ENCODE measurements at regions of chr1 and their contacts with region 1.

Region 1: DNA sequence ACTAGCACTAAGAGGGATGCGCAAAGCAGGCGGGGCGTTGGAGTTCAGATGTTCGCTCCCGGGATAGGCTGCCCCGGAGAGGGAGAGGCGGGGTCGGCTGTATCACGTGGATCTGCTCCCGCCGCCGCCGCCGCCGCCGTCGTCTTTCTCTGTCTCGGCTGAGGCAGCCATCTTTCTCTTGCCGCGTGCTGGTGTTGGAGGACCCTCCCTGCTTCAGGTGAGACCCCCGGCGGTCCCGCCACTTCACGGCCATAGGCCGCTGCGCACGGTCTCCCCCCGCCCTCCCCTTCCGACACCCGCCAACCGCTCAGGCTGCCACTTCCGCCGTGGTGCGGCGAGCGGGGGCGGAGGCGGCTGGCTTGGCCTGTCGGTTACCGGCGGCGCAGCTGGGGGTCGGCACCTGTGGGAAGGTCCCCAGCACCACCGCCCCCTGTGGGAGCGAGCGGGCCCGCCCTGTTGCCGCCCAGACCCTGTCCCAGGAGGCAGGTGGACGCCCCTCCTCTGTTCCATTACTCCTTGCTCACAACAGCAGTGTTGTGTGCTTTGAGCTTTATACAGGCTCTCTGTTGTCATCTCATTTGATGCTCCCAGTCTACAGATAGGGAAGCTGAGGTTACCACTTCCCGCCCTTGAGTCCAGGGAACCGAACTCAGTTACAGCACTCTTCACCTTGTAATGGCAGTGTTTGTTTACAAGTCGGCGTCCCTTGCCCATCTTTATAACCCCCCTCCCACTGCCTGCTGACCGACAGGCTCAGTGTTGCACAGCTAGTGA is at the start of gene BTF3L4:
- DNase-seq: peak; percentile 85 to 95 (median 90)
- ATAC-seq: peak; percentile 96
- H3K4me3 ChIP-seq: peak within 1 kb of the TSS; percentile 88
- H3K4me3 Mint-ChIP-seq: peak within 1 kb of the TSS; percentile 97
- H3K27ac ChIP-seq: peak within 1 kb of the TSS; percentile 83 to 84
- H3K27ac Mint-ChIP-seq: peak within 1 kb of the TSS; percentile 92
- H3K4me1 ChIP-seq: peaks cover 26% of the 10 kb centered on the region
- H3K4me1 Mint-ChIP-seq: peaks cover 71% of the 10 kb centered on the region
- H3K27me3 ChIP-seq: no peaks in the 10 kb centered on the region
- H3K27me3 Mint-ChIP-seq: no peaks in the 10 kb centered on the region
- CTCF ChIP-seq: no peak
- total RNA-seq, gene BTF3L4: 29.4 to 34.1 TPM

Region 2: GRCh38 chr1:51519048-51519864 is 537.1 kb before region 1 on chr1 and contains the start of gene EPS15:
- CTCF ChIA-PET with region 1: no interaction called
- POLR2A ChIA-PET with region 1: interaction called, 3 read pairs
- intact Hi-C with region 1: loop called in 1 of 2 experiments (anchors 10 kb)
- DNase-seq: peak; percentile 73 to 92 (median 82)
- ATAC-seq: peak; percentile 69
- H3K4me3 ChIP-seq: peak within 1 kb of the TSS; percentile 76
- H3K4me3 Mint-ChIP-seq: peak within 1 kb of the TSS; percentile 94
- H3K27ac ChIP-seq: peak within 1 kb of the TSS; percentile 48 to 50
- H3K27ac Mint-ChIP-seq: peak within 1 kb of the TSS; percentile 88
- H3K4me1 ChIP-seq: peaks cover 24% of the 10 kb centered on the region
- H3K4me1 Mint-ChIP-seq: peaks cover 59% of the 10 kb centered on the region
- H3K27me3 ChIP-seq: no peaks in the 10 kb centered on the region
- H3K27me3 Mint-ChIP-seq: no peaks in the 10 kb centered on the region
- CTCF ChIP-seq: no peak
- total RNA-seq, gene EPS15: 44.5 to 47.9 TPM

Region 3: GRCh38 chr1:51989723-51990477 is 66.5 kb before region 1 on chr1:
- CTCF ChIA-PET with region 1: no interaction called
- POLR2A ChIA-PET with region 1: no interaction called
- intact Hi-C with region 1: no loop called
- DNase-seq: peak in 2 of 14 experiments; percentile 7 to 16
- ATAC-seq: no peak
- H3K4me3 ChIP-seq: no peak overlapping the region
- H3K4me3 Mint-ChIP-seq: peak overlapping the region; percentile 64
- H3K27ac ChIP-seq: no peak overlapping the region
- H3K27ac Mint-ChIP-seq: no peak overlapping the region
- H3K4me1 ChIP-seq: peaks cover 13% of the 10 kb centered on the region
- H3K4me1 Mint-ChIP-seq: peaks cover 17% of the 10 kb centered on the region
- H3K27me3 ChIP-seq: peaks cover 15 to 29% of the 10 kb centered on the region in 2 experiments
- H3K27me3 Mint-ChIP-seq: peaks cover 35% of the 10 kb centered on the region
- CTCF ChIP-seq: no peak

Region 4: DNA sequence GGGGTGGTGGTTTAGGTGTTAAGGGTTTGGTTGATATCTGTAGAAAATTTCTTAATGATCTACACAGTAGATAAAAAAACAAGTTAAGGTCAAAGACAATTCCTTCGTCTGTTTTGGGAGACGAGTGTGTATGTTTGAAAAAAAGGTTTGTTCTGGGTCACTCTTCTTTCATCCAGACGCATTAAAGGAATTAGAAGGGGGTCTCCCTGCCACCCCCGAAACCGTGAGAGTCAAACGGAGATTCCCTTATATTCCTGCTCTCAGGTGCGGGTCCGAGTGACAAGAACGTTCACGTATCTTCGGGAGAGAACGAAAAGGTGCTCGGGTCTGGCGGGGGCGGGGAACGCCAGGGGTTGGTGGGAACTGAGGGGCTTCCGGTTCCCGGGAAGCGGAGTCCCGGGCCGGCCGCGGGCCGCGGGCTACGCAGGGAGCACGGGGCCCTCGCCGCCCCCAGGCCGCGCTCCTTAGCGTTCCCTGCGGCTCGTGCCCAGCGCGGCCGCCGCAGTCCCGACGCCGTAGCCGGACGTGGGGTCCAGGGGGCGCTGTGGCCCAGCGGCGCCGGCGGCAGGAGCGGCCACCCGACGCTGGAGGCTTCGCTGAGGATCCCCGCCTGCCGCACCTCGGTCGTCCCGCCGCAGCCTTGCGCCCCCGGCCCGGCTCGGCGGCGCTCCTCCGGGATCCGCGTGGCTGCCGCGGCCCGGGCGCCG is 85.3 kb after region 1 on chr1 and contains the start of gene ZFYVE9:
- CTCF ChIA-PET with region 1: no interaction called
- POLR2A ChIA-PET with region 1: no interaction called
- intact Hi-C with region 1: loop called in 1 of 2 experiments (anchors 5 kb)
- DNase-seq: peak; percentile 43 to 91 (median 68)
- ATAC-seq: peak; percentile 82
- H3K4me3 ChIP-seq: peak within 1 kb of the TSS; percentile 63
- H3K4me3 Mint-ChIP-seq: peak within 1 kb of the TSS; percentile 97
- H3K27ac ChIP-seq: no peak within 1 kb of the TSS
- H3K27ac Mint-ChIP-seq: peak within 1 kb of the TSS; percentile 85
- H3K4me1 ChIP-seq: peaks cover 23% of the 10 kb centered on the region
- H3K4me1 Mint-ChIP-seq: peaks cover 36% of the 10 kb centered on the region
- H3K27me3 ChIP-seq: no peaks in the 10 kb centered on the region
- H3K27me3 Mint-ChIP-seq: no peaks in the 10 kb centered on the region
- CTCF ChIP-seq: peak; percentile 33
- total RNA-seq, gene ZFYVE9: 5.4 to 6.1 TPM

Region 5: GRCh38 chr1:52159033-52159789 is 102.9 kb after region 1 on chr1:
- CTCF ChIA-PET with region 1: no interaction called
- POLR2A ChIA-PET with region 1: no interaction called
- intact Hi-C with region 1: no loop called
- DNase-seq: no peak
- ATAC-seq: no peak
- H3K4me3 ChIP-seq: no peak overlapping the region
- H3K4me3 Mint-ChIP-seq: no peak overlapping the region
- H3K27ac ChIP-seq: no peak overlapping the region
- H3K27ac Mint-ChIP-seq: no peak overlapping the region
- H3K4me1 ChIP-seq: no peaks in the 10 kb centered on the region
- H3K4me1 Mint-ChIP-seq: no peaks in the 10 kb centered on the region
- H3K27me3 ChIP-seq: no peaks in the 10 kb centered on the region
- H3K27me3 Mint-ChIP-seq: no peaks in the 10 kb centered on the region
- CTCF ChIP-seq: no peak

Region 6: GRCh38 chr1:52237430-52237829 is 181.1 kb after region 1 on chr1:
- CTCF ChIA-PET with region 1: no interaction called
- POLR2A ChIA-PET with region 1: no interaction called
- intact Hi-C with region 1: no loop called
- DNase-seq: no peak
- ATAC-seq: no peak
- H3K4me3 ChIP-seq: no peak overlapping the region
- H3K4me3 Mint-ChIP-seq: no peak overlapping the region
- H3K27ac ChIP-seq: no peak overlapping the region
- H3K27ac Mint-ChIP-seq: no peak overlapping the region
- H3K4me1 ChIP-seq: no peaks in the 10 kb centered on the region
- H3K4me1 Mint-ChIP-seq: peaks cover 4% of the 10 kb centered on the region
- H3K27me3 ChIP-seq: no peaks in the 10 kb centered on the region
- H3K27me3 Mint-ChIP-seq: no peaks in the 10 kb centered on the region
- CTCF ChIP-seq: no peak

Region 7: GRCh38 chr1:52404116-52404986 is 348.0 kb after region 1 on chr1 and contains the starts of genes ORC1 and PRPF38A:
- CTCF ChIA-PET with region 1: no interaction called
- POLR2A ChIA-PET with region 1: interaction called, 5 read pairs
- intact Hi-C with region 1: loop called in 1 of 2 experiments (anchors 5 kb)
- DNase-seq: peak; percentile 94 to 100 (median 97)
- ATAC-seq: peak; percentile 89
- H3K4me3 ChIP-seq: peak within 1 kb of the TSS; percentile 62
- H3K4me3 Mint-ChIP-seq: peak within 1 kb of the TSS; percentile 98
- H3K27ac ChIP-seq: peak within 1 kb of the TSS; percentile 88 to 89
- H3K27ac Mint-ChIP-seq: peak within 1 kb of the TSS; percentile 99
- H3K4me1 ChIP-seq: peaks cover 13% of the 10 kb centered on the region
- H3K4me1 Mint-ChIP-seq: peaks cover 48% of the 10 kb centered on the region
- H3K27me3 ChIP-seq: no peaks in the 10 kb centered on the region
- H3K27me3 Mint-ChIP-seq: no peaks in the 10 kb centered on the region
- CTCF ChIP-seq: peak; percentile 34
- total RNA-seq, gene ORC1: 1.1 to 1.3 TPM
- total RNA-seq, gene PRPF38A: 56.2 to 63.6 TPM

Region 8: DNA sequence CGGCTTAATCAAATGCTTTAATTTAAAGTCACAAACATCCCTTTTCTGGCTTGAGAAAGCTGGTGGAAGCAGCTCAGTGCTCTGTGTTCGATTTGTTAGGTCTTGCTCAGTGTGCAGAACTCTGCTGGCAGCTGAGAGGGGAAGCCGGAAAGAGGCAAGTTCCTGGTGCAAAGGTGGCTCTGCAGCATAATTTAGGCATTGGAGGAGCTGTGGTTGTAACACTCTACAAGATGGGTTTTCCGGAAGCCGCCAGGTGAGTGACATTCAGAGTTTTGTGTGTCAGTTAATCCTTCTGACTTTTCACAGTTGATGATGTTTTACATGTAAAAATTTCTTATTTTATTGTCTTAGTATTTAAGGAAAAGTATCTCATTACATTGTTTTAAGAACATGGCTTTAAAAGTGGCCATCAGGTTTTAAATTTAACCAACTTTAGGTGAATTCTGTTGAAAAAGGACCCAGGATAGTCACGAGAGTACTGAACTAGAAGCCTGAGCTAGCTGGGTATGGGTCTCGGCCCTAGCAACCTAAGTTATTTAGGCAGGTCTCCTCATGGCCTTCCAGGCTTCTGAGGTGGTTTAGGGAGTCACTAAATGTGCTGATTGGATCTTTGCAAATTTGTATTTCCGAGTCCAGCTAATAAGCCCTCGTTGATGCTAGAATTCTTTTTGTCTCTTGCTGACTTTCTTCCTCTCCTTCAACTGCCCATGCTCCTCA is 958.6 kb after region 1 on chr1:
- CTCF ChIA-PET with region 1: no interaction called
- POLR2A ChIA-PET with region 1: interaction called, 3 read pairs
- intact Hi-C with region 1: loop called in 1 of 2 experiments (anchors 5 kb)
- DNase-seq: peak; percentile 62 to 95 (median 69)
- ATAC-seq: peak; percentile 100
- H3K4me3 ChIP-seq: peak overlapping the region; percentile 58
- H3K4me3 Mint-ChIP-seq: peak overlapping the region; percentile 88
- H3K27ac ChIP-seq: no peak overlapping the region
- H3K27ac Mint-ChIP-seq: peak overlapping the region; percentile 41
- H3K4me1 ChIP-seq: peaks cover 9% of the 10 kb centered on the region
- H3K4me1 Mint-ChIP-seq: peaks cover 38% of the 10 kb centered on the region
- H3K27me3 ChIP-seq: no peaks in the 10 kb centered on the region
- H3K27me3 Mint-ChIP-seq: no peaks in the 10 kb centered on the region
- CTCF ChIP-seq: no peak

Region 9: DNA sequence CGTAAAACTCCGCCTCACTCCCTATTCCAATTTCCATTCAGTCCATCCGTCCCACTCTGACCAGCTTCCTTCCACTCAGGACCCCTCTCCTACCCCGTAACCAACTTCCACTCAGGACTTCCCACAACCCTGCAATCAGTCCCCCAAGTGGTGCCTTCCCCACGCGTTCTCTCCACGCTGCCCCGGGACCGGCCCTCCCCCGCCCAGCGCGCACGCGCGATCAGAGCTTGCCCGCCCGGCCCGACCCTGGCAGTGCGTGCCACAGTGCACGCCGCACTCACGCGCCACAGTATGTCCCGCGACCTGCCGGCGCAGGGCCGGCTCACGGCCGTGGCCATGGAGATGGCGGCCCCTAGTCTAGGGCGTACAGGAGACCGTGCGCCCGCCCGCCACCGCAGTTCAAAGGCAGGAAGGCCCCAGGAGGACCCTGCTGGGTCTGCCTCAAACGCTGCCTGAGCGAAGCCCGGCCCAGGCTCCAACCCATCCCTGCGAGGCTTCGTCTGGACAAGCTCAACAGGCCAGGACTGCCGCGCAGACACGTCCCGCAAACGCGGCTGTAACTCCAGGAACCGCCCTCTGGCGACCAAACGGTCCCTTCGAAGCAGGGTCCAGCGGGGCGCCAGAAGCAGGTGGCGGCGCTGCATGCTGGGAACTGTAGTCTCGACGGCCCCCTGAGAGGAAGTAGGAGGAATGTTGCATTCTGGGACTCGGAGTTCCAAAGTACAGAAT is 1781.7 kb after region 1 on chr1 and contains the start of gene NDC1:
- CTCF ChIA-PET with region 1: no interaction called
- POLR2A ChIA-PET with region 1: no interaction called
- intact Hi-C with region 1: loop called in 1 of 2 experiments (anchors 10 kb)
- DNase-seq: peak; percentile 79 to 96 (median 86)
- ATAC-seq: peak; percentile 89
- H3K4me3 ChIP-seq: peak within 1 kb of the TSS; percentile 73
- H3K4me3 Mint-ChIP-seq: peak within 1 kb of the TSS; percentile 95
- H3K27ac ChIP-seq: peak within 1 kb of the TSS; percentile 95 to 98
- H3K27ac Mint-ChIP-seq: peak within 1 kb of the TSS; percentile 95
- H3K4me1 ChIP-seq: peaks cover 13% of the 10 kb centered on the region
- H3K4me1 Mint-ChIP-seq: peaks cover 37% of the 10 kb centered on the region
- H3K27me3 ChIP-seq: peaks cover 0 to 5% of the 10 kb centered on the region in 2 experiments
- H3K27me3 Mint-ChIP-seq: no peaks in the 10 kb centered on the region
- CTCF ChIP-seq: no peak
- total RNA-seq, gene NDC1: 5.4 to 8.1 TPM

Measured in CD4-positive, alpha-beta T cell (primary cell).